Activated CD4-positive, alpha-beta T cell treated with anti-CD3 and anti-CD28 coated beads for 36 hours (primary cell): ENCODE measurements at regions of chr2 and their contacts with region 1.

Region 1: GRCh38 chr2:227324995-227325838 is at the start of gene MFF:
- DNase-seq: peak; percentile 97
- ATAC-seq: peak; percentile 97
- H3K4me3 Mint-ChIP-seq: peak within 1 kb of the TSS; percentile 89
- H3K27ac Mint-ChIP-seq: peak within 1 kb of the TSS; percentile 91
- H3K4me1 Mint-ChIP-seq: peaks cover 27% of the 10 kb centered on the region
- H3K27me3 Mint-ChIP-seq: no peaks in the 10 kb centered on the region
- total RNA-seq, gene MFF: 78.3 to 104 TPM

Region 2: GRCh38 chr2:227125506-227125905 is 199.7 kb before region 1 on chr2:
- CTCF ChIA-PET with region 1: no interaction called
- POLR2A ChIA-PET with region 1: no interaction called
- intact Hi-C with region 1: loop called in 1 of 2 experiments (anchors 2 kb)
- DNase-seq: peak; percentile 8
- ATAC-seq: no peak
- H3K4me3 Mint-ChIP-seq: no peak overlapping the region
- H3K27ac Mint-ChIP-seq: no peak overlapping the region
- H3K4me1 Mint-ChIP-seq: no peaks in the 10 kb centered on the region
- H3K27me3 Mint-ChIP-seq: peaks cover 15% of the 10 kb centered on the region

Region 3: DNA sequence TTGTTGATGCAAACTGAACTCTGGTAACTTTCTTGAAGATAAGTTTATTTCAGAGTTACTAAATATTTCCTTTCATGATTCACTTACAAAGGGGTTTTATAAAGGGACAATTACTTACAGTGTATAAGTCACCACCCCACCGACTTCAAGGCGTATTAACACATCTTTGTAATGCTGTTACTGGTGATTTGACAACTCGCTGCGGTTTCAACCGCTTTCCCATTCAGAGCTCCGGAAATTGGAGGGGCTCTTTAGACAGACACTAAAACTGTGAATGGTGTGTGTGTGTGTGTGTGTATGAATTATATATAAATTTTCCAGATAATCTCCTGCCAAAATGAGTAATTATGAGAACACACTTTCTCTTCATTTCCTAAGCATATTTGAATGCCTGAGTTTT is 48.9 kb after region 1 on chr2:
- CTCF ChIA-PET with region 1: no interaction called
- POLR2A ChIA-PET with region 1: no interaction called
- intact Hi-C with region 1: loop called in 1 of 2 experiments (anchors 1 kb)
- DNase-seq: peak; percentile 76
- ATAC-seq: peak; percentile 89
- H3K4me3 Mint-ChIP-seq: no peak overlapping the region
- H3K27ac Mint-ChIP-seq: peak overlapping the region; percentile 59
- H3K4me1 Mint-ChIP-seq: peaks cover 26% of the 10 kb centered on the region
- H3K27me3 Mint-ChIP-seq: peaks cover 2% of the 10 kb centered on the region

Region 4: DNA sequence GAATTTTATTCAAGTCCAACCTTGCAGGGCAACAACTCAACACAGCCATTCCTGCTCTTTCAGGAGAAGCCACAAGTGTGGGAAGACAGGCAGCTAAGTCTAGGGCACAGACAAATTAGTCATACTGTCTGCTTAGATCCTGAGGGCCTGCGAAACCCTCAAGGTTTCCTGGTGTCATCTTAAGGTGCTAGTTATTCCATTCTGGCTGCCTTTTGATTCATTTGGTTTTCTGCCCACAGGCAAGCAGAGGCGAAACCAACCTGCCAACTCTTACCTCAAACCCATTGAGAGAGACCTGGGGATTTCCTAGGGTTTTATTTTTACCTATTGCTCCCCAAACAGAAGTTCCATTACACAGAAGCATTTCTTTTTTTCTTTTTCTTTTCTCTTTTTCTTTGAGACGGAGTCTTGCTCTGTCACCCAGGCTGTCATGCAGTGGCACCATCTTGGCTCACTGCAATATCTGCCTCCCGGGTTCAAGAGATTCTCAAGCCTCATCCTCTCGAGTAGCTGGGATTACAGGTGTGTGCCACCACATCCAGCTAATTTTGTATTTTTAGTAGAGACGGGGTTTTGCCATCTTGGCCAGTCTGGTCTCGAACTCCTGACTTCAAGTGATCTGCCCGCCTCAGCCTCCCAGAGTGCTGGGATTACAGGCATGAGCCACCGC is 86.2 kb after region 1 on chr2:
- CTCF ChIA-PET with region 1: no interaction called
- POLR2A ChIA-PET with region 1: no interaction called
- intact Hi-C with region 1: loop called (anchors 1 to 2 kb)
- DNase-seq: peak; percentile 80
- ATAC-seq: peak; percentile 87
- H3K4me3 Mint-ChIP-seq: peak overlapping the region; percentile 12
- H3K27ac Mint-ChIP-seq: peak overlapping the region; percentile 92
- H3K4me1 Mint-ChIP-seq: peaks cover 66% of the 10 kb centered on the region
- H3K27me3 Mint-ChIP-seq: no peaks in the 10 kb centered on the region

Region 5: GRCh38 chr2:227460070-227460485 is 134.9 kb after region 1 on chr2:
- CTCF ChIA-PET with region 1: no interaction called
- POLR2A ChIA-PET with region 1: no interaction called
- intact Hi-C with region 1: loop called (anchors 1 to 5 kb)
- DNase-seq: peak; percentile 86
- ATAC-seq: peak; percentile 37
- H3K4me3 Mint-ChIP-seq: peak overlapping the region; percentile 60
- H3K27ac Mint-ChIP-seq: peak overlapping the region; percentile 85
- H3K4me1 Mint-ChIP-seq: peaks cover 86% of the 10 kb centered on the region
- H3K27me3 Mint-ChIP-seq: no peaks in the 10 kb centered on the region